ENCODE measurements at regions of chr11 and their contacts with region 1.

Region 1: GRCh38 chr11:17384002-17384511 is 4.4 kb downstream of the KCNJ11 start:
- DNase-seq: peak; percentile 63 to 88 (median 64)
- ATAC-seq: peak; percentile 70
- H3K4me3 ChIP-seq: no peak overlapping the region
- H3K27ac ChIP-seq: no peak overlapping the region
- H3K4me1 ChIP-seq: peaks cover 2 to 29% of the 10 kb centered on the region in 2 experiments; a peak in 3 of 5 replicates
- H3K27me3 ChIP-seq: no peaks in the 10 kb centered on the region
- CTCF ChIP-seq: peak; percentile 91 to 93 (median 92)
- EP300 ChIP-seq: no peak
- POLR2A ChIP-seq: no peak
- RAD21 ChIP-seq: peak; percentile 85 to 89

Region 2: DNA sequence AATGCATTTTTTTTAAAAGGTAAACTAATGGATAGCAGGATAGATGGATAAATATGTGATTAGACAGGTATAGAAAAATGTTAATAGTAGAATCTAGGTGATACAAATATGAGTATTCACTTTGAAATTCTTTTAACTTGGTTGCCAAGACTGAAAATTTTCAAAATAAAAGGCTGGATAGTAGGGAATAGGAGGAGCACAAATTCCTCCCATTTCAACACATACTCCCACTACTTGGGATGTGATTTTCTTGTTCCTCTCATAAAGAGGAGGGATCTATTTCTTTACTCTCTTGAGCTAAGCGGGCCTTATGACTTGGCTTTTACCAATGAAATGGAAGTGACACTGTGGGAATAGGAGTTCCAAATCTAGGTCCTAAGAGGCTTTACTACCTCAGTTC is 212.1 kb before region 1 on chr11:
- CTCF ChIA-PET with region 1: no interaction called
- POLR2A ChIA-PET with region 1: no interaction called
- in situ Hi-C with region 1: no loop called
- intact Hi-C with region 1: no loop called
- DNase-seq: no peak
- ATAC-seq: no peak
- H3K4me3 ChIP-seq: no peak overlapping the region
- H3K27ac ChIP-seq: no peak overlapping the region
- H3K4me1 ChIP-seq: no peaks in the 10 kb centered on the region
- H3K27me3 ChIP-seq: no peaks in the 10 kb centered on the region
- CTCF ChIP-seq: no peak
- EP300 ChIP-seq: no peak
- POLR2A ChIP-seq: no peak
- RAD21 ChIP-seq: no peak

Region 3: DNA sequence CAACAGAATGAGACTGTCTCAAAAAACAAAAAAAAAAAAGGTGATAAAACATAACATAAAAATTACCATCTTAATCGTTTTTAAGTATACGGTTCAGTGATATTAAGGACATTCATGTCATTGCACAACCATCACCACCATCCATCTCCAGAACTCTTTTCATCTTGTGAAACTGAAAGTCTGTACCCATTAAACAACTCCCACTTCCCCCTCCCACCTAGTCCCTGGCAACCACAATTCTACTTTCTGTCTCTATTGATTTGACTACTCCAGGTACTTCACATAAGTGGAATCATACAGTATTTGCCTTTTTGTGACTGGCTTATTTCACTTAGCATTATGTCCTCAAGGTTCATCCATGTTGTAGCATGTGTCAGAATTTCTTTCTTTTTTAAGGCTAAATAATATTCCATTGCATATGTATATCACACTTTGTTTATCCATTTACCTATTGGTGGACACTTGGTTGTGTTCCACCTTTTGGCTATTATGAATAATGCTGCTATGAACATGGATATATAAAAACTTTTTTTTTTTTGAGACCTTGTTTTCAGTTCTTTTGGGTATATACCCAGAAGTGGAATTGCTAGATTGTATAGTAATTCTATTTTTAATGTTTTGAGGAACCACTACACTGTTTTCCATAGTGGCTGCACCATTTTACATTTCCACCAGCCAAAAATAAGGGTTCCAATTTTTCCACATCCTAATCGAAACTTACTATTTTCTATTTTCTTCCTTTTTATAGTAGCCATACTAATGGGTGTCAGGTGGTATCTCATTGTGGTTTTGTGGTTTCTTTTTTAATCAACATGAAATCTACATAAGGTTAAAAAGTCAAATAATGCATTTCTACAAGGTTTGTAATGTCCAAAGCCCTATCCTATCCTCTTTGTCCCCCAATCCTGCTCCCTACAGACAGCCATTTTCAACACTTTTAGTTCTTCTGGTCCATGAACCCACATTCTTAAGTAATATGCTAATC is 152.9 kb before region 1 on chr11:
- CTCF ChIA-PET with region 1: interaction called, 8 read pairs
- POLR2A ChIA-PET with region 1: no interaction called
- in situ Hi-C with region 1: no loop called
- intact Hi-C with region 1: loop called (anchors 2 kb)
- DNase-seq: no peak
- ATAC-seq: no peak
- H3K4me3 ChIP-seq: no peak overlapping the region
- H3K27ac ChIP-seq: no peak overlapping the region
- H3K4me1 ChIP-seq: no peaks in the 10 kb centered on the region
- H3K27me3 ChIP-seq: no peaks in the 10 kb centered on the region
- CTCF ChIP-seq: no peak
- EP300 ChIP-seq: no peak
- POLR2A ChIP-seq: no peak
- RAD21 ChIP-seq: no peak

Region 4: DNA sequence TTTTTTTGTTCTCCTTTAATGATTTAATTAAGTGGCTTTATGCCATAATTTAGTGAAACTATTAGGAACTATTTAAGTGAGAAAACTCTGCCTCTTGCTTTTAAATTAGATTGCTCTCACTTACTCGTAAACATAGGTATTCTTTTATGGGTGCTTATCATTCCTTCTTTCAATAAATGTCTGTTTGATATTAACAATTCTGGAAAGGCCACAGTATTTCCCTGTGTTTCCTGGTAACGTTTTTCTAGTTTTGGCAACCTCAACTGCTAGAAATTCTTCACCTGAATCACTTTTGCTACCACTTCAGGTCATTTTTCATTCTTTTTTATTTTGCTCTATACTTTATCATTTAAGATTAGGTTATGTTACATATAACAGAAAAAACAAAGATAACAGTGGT is 52.4 kb before region 1 on chr11:
- CTCF ChIA-PET with region 1: no interaction called
- POLR2A ChIA-PET with region 1: no interaction called
- in situ Hi-C with region 1: no loop called
- intact Hi-C with region 1: loop called (anchors 2 kb)
- DNase-seq: no peak
- ATAC-seq: no peak
- H3K4me3 ChIP-seq: no peak overlapping the region
- H3K27ac ChIP-seq: no peak overlapping the region
- H3K4me1 ChIP-seq: no peaks in the 10 kb centered on the region
- H3K27me3 ChIP-seq: no peaks in the 10 kb centered on the region
- CTCF ChIP-seq: no peak
- EP300 ChIP-seq: no peak
- POLR2A ChIP-seq: no peak
- RAD21 ChIP-seq: no peak

Region 5: GRCh38 chr11:17471501-17471900 is 87.4 kb after region 1 on chr11:
- CTCF ChIA-PET with region 1: no interaction called
- POLR2A ChIA-PET with region 1: no interaction called
- in situ Hi-C with region 1: no loop called
- intact Hi-C with region 1: loop called (anchors 1 kb)
- DNase-seq: peak in 1 of 4 experiments; percentile 6
- ATAC-seq: peak; percentile 56; the same call in 2 of the 3 replicates
- H3K4me3 ChIP-seq: no peak overlapping the region
- H3K27ac ChIP-seq: no peak overlapping the region
- H3K4me1 ChIP-seq: 0 out of 5 replicates have a peak, but pooled peaks cover 0 to 7% of the 10 kb centered on the region in 2 experiments
- H3K27me3 ChIP-seq: peaks cover 9 to 26% of the 10 kb centered on the region in 2 experiments; a peak in 4 of 5 replicates
- CTCF ChIP-seq: peak in 2 of 3 experiments; percentile 12 to 36; a peak in 4 of 6 replicates
- EP300 ChIP-seq: no peak
- POLR2A ChIP-seq: no peak
- RAD21 ChIP-seq: peak in 1 of 2 experiments; percentile 43; a peak in 2 of 4 replicates

Region 6: DNA sequence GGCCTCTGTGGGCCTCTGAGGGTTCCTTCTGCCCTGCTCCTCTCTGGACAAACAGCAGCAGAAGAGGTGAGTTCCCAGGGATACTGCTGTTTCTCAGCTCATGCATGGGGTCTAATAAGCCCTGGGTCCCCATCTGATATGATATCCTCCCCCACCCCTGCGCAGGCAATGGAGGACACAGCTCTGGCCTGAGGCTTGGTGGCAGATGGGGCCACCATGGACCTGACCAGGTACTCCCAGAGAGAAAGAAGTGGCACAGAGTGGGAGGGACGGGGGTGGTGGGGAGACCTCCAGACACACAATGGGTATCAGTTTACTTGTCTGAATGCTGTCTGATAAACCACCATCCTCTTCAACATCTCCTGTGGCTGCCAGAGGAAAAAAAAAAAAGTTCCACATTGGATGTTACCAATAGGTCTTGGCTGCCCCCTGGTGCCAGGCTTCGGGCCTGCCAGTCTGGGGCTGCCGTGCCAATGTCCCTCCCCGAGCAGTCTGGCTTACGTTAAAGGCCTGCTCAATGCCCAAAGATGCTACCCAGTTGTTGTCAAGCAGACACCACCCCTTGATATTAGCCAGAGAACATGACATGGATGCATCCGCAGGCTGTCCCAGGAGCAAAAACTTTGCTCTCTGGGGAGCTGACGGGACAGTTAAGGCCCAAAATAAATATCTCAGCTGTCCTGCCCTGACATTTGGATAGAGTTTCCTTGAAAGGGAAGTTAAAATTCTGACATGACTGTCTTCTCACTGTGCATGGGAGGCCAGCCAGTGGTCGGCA is 120.5 kb after region 1 on chr11:
- CTCF ChIA-PET with region 1: interaction called, 31 read pairs
- POLR2A ChIA-PET with region 1: no interaction called
- in situ Hi-C with region 1: no loop called
- intact Hi-C with region 1: loop called (anchors 1 kb)
- DNase-seq: peak; percentile 53 to 66 (median 63)
- ATAC-seq: peak; percentile 80
- H3K4me3 ChIP-seq: no peak overlapping the region
- H3K27ac ChIP-seq: no peak overlapping the region
- H3K4me1 ChIP-seq: no peaks in the 10 kb centered on the region
- H3K27me3 ChIP-seq: peaks cover 3 to 65% of the 10 kb centered on the region in 2 experiments; a peak in 3 of 5 replicates
- CTCF ChIP-seq: peak; percentile 76 to 77 (median 76)
- EP300 ChIP-seq: no peak
- POLR2A ChIP-seq: no peak
- RAD21 ChIP-seq: peak; percentile 76 to 78

Region 7: DNA sequence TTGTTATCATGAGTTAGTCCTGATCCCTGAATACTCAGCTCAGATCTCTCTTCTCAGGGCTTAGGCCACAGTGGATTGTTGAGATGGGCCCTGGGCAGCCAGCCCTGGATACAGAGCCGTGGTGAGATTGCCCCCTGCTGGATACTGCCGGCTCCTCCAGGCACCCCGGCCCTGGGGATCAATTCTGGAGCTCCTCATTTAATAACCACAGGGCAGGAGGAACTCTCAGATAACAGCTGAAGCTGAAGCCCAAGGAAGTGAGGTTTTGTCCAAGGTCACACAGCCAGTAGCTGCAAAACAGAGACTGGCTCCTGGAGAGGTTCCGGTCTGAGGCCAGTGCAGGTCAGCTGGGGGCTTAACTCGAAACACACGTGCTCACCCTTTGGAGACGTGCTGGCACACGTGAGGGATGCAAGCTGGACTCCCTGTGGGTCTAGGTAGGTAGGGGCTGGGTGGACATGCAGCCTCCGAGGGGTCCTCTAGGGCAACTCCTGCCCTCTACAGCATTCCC is 144.2 kb after region 1 on chr11:
- CTCF ChIA-PET with region 1: interaction called, 11 read pairs
- POLR2A ChIA-PET with region 1: no interaction called
- in situ Hi-C with region 1: no loop called
- intact Hi-C with region 1: loop called (anchors 1 kb)
- DNase-seq: peak; percentile 77 to 88 (median 84)
- ATAC-seq: peak; percentile 98
- H3K4me3 ChIP-seq: no peak overlapping the region
- H3K27ac ChIP-seq: no peak overlapping the region
- H3K4me1 ChIP-seq: peaks cover 0 to 5% of the 10 kb centered on the region in 2 experiments; a peak in 3 of 5 replicates
- H3K27me3 ChIP-seq: peaks cover 21 to 70% of the 10 kb centered on the region in 2 experiments; a peak in 4 of 5 replicates
- CTCF ChIP-seq: peak; percentile 88 to 92 (median 89)
- EP300 ChIP-seq: no peak
- POLR2A ChIP-seq: no peak
- RAD21 ChIP-seq: peak; percentile 89